ENCODE measurements at regions of chr19 and their contacts with region 1.

Region 1: DNA sequence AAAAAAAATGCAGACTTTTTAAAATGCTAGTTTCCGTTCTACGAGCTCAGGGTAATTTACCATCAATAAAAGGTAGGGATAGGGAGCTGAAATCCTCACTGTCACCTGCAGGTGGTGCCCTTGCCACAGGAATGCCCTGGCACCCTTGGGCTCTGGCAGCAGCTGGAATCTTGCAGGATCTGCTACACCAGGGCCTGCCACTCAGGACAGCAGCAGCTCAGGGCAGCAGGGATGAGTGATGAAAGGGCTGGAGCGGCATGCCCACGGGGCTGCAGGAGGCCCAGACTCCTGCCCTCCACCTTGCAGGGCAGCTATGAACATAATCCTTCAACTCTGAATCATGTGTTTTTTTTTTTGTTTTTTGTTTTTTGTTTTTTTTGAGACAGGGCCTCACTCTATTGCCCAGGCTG is 54.0 kb downstream of the GNG7 start:
- DNase-seq: peak; percentile 88
- ATAC-seq: peak; percentile 78
- H3K4me3 Mint-ChIP-seq: no peak overlapping the region
- H3K27ac Mint-ChIP-seq: no peak overlapping the region
- H3K4me1 Mint-ChIP-seq: no peaks in the 10 kb centered on the region
- H3K27me3 Mint-ChIP-seq: no peaks in the 10 kb centered on the region
- CTCF ChIP-seq: peak; percentile 94

Region 2: GRCh38 chr19:2627319-2627829 is 21.2 kb before region 1 on chr19:
- CTCF ChIA-PET with region 1: interaction called, 18 read pairs
- POLR2A ChIA-PET with region 1: no interaction called
- DNase-seq: no peak
- ATAC-seq: no peak
- H3K4me3 Mint-ChIP-seq: no peak overlapping the region
- H3K27ac Mint-ChIP-seq: peak overlapping the region; percentile 15; the same call in 1 of the 2 replicates
- H3K4me1 Mint-ChIP-seq: peaks cover 3% of the 10 kb centered on the region; the same call in 1 of the 2 replicates
- H3K27me3 Mint-ChIP-seq: no peaks in the 10 kb centered on the region; the same call in 1 of the 2 replicates
- CTCF ChIP-seq: no peak

Region 3: DNA sequence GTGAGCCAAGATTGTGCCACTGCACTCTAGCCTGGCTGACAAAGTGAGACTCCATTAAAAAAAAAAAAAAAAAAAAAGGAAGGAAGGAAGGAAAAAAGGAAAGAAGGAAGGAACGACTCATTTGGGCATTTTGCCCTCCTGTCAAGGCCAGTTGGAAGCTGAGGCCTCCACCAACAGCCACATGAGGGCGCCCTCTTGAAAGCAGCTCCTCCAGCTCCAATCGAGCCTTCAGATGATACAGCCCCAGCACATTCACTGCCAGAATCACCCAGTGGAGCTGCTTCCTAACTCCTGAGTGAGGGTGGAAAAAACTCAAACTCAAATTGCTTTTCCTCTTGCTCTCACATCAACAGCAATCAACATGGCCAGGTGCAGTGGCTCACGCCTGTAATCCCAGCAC is 13.1 kb after region 1 on chr19:
- CTCF ChIA-PET with region 1: interaction called, 20 read pairs
- POLR2A ChIA-PET with region 1: no interaction called
- DNase-seq: peak; percentile 46
- ATAC-seq: no peak
- H3K4me3 Mint-ChIP-seq: no peak overlapping the region
- H3K27ac Mint-ChIP-seq: no peak overlapping the region
- H3K4me1 Mint-ChIP-seq: no peaks in the 10 kb centered on the region
- H3K27me3 Mint-ChIP-seq: peaks cover 3% of the 10 kb centered on the region
- CTCF ChIP-seq: no peak

Region 4: GRCh38 chr19:2711172-2711874 is 62.8 kb after region 1 on chr19:
- CTCF ChIA-PET with region 1: interaction called, 12 read pairs
- POLR2A ChIA-PET with region 1: no interaction called
- DNase-seq: no peak
- ATAC-seq: no peak; the same call in 1 of the 2 replicates
- H3K4me3 Mint-ChIP-seq: no peak overlapping the region
- H3K27ac Mint-ChIP-seq: no peak overlapping the region; the same call in 1 of the 2 replicates
- H3K4me1 Mint-ChIP-seq: no peaks in the 10 kb centered on the region
- H3K27me3 Mint-ChIP-seq: peaks cover 8% of the 10 kb centered on the region
- CTCF ChIP-seq: no peak

Region 5: DNA sequence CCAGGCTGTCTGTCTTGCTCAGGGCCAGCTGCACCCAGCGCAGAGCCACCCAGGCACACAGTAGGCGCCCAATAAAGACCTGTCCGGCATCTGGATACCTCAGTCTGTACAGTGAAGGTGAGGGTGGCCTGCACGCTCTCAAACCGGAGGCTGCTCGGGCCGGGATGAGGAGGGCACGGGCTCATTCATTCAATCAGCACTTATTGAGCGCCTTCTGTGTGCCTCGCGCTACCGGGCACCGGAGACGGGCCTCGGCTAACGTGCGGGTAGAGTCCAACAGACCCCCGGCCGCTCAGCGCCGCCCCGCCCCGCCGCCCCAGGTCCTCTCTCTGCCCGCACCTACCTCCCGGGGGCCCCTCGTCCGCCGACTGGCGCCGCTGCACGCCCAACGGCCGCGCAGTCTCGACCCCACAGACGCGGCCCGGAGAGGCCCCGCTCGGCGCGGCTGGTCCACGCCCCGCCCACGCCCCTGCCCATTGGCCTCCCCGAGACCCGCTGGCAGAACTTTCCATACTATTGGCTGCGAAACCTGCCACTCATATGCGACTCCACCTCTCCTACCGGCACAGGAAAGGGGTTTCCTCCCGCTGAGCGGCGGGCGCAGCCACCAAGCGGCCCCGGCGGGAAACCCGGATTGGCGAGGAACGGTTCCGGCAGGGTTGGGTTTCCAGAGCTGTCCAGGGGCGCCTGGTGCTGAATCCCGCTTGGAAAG is 91.2 kb after region 1 on chr19 and contains the start of gene SLC39A3:
- CTCF ChIA-PET with region 1: interaction called, 16 read pairs
- POLR2A ChIA-PET with region 1: no interaction called
- DNase-seq: peak; percentile 100
- ATAC-seq: peak; percentile 99
- H3K4me3 Mint-ChIP-seq: peak within 1 kb of the TSS; percentile 84
- H3K27ac Mint-ChIP-seq: no peak within 1 kb of the TSS; the same call in 1 of the 2 replicates
- H3K4me1 Mint-ChIP-seq: peaks cover 4% of the 10 kb centered on the region
- H3K27me3 Mint-ChIP-seq: peaks cover 16% of the 10 kb centered on the region
- CTCF ChIP-seq: no peak
- total RNA-seq, gene SLC39A3: 34.8 to 38.0 TPM (median 35.2 TPM) in 3 replicates

Region 6: DNA sequence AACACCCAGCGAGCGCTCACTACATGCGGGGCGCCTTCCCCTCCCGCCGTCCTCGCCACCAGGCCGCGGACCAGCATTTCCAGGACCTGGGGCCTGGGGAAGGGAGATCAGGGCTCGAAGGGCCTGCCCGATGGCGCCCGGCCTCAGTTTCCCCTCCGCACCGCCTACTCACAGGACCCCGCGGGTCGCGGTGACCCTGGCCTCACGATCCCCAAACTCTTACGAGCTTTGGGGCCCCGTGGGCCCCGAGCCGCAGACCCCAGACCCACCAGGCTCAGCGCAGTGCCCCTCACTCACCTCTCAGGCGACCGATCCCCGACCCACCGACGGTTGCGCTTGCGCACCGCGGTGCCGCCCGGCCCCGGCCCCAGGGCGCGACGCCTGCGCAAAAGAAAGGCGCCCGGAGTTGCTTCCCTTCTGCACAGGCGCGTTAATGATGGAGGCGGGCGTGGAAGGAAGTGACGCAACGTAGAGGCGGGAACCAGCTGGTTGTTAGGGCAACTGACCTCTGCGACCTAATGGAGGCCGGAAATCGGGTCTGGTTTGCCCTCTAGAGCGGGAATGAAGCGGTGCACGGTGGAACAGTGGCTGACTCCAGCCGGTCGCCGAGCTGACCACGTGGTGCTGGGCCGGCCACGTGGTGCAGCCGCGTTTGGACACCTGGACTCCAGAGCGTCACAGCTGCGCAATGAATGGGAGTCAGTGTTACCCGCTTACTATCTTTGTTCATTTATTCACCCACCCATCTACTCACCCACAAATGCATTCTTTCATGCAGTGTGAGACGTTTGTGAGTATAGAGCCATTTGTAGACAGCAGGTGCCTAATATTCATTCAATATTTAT is 134.6 kb after region 1 on chr19 and contains the start of gene SGTA:
- CTCF ChIA-PET with region 1: interaction called, 12 read pairs
- POLR2A ChIA-PET with region 1: no interaction called
- DNase-seq: peak; percentile 98
- ATAC-seq: peak; percentile 80
- H3K4me3 Mint-ChIP-seq: peak within 1 kb of the TSS; percentile 90
- H3K27ac Mint-ChIP-seq: peak within 1 kb of the TSS; percentile 99
- H3K4me1 Mint-ChIP-seq: peaks cover 27% of the 10 kb centered on the region
- H3K27me3 Mint-ChIP-seq: peaks cover 4% of the 10 kb centered on the region; the same call in 1 of the 2 replicates
- CTCF ChIP-seq: no peak
- total RNA-seq, gene SGTA: 89.3 to 91.2 TPM (median 89.4 TPM) in 3 replicates

Region 7: GRCh38 chr19:2887391-2887914 is 238.9 kb after region 1 on chr19:
- CTCF ChIA-PET with region 1: interaction called, 24 read pairs
- POLR2A ChIA-PET with region 1: no interaction called
- DNase-seq: no peak
- ATAC-seq: peak; percentile 95
- H3K4me3 Mint-ChIP-seq: no peak overlapping the region
- H3K27ac Mint-ChIP-seq: peak overlapping the region; percentile 28
- H3K4me1 Mint-ChIP-seq: peaks cover 8% of the 10 kb centered on the region
- H3K27me3 Mint-ChIP-seq: no peaks in the 10 kb centered on the region; the same call in 1 of the 2 replicates
- CTCF ChIP-seq: peak; percentile 25